ENCODE measurements at regions of chr6 and their contacts with region 1.

Region 1: DNA sequence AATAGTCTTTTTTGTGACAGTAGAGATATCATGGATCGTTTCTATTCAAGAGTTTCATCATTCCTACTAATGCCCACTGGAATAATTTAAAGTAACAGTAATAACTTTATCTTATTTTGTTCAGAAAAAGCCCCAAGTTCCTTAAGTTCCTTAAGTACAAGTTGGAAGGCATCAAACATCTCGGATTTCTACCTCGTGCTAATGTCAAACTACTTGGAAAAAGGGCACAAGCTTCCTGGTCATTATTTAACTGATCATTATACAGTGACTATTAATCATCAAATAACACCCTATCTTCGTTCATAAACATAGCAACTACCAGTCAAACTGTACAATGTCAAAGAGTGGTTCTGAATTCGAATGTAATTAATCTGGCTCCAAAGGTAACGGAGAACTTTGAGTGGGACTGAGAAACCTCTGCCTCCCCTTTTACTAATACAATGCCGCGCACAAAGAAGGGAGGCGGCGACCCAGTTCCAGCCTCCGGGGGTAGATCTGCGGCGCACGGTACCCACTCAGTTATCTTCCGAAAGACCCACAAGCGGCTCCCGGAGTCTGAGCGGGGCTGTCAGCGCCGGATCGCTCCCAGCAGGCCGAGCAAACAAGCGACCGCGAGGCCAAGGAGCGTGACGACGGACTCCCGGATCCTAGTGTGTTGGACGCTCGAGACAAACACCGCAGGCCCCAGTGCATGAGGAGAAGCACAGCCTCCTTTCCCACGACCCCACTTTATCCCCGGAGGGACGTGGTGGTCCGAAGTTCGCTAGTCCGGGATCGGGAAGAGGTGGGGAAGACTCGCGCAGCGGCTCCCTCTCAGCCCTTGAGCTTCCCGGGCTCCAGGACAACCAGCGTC is 716 bp downstream of the SHPRH start:
- DNase-seq: peak in 40 of 42 donors; percentile 24 to 79 (median 56)

Region 2: GRCh38 chr6:145539831-145540230 is 423.6 kb before region 1 on chr6:
- intact Hi-C with region 1: no loop called
- DNase-seq: no peak

Region 3: GRCh38 chr6:145734486-145735355 is 228.7 kb before region 1 on chr6:
- intact Hi-C with region 1: loop called (anchors 10 kb)
- DNase-seq: peak; percentile 73 to 94 (median 86)

Region 4: DNA sequence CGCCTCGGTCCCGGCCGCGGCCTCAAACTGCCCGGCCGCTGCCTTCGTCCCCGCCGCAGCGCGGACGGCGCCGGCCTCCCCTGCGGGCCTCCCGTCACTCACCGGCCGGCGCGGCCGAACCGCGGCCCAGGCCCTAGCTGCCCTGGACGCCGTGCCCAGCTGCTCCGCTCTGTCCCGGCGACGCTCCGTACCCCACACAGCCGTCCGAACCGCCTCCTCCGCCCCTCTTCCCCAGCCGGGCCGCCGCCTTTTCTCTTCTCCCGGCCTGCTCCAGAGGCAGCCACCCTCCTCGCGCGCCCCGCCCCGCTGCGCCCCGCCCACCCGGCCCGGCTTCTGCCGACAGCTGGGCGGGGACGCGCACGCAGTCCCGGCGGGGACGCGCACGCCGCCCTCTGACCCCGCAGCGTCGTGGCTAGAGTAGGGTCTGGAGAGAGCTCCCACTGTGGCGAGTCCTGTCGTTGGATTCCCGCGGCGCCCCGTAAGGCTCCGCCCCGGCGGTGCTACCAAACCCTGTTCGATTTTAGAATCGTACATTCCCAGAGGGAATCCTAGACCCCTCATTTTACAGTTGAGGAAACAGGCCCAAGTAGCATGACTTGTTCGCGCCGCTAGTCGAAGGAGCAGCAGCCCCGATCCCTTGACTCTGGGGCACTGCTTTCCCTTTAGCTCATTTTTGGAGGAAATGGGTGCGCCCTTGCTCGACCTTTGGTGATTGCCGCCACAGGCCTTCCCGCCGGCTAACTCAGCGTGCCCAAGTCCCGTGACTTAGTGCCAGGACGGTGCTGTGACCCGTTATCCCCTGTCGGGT is 148.7 kb before region 1 on chr6 and contains the start of gene FBXO30:
- intact Hi-C with region 1: loop called (anchors 10 kb)
- DNase-seq: peak; percentile 72 to 95 (median 90)

Region 5: GRCh38 chr6:146111881-146112450 is 148.5 kb after region 1 on chr6:
- intact Hi-C with region 1: no loop called
- DNase-seq: no peak

Region 6: DNA sequence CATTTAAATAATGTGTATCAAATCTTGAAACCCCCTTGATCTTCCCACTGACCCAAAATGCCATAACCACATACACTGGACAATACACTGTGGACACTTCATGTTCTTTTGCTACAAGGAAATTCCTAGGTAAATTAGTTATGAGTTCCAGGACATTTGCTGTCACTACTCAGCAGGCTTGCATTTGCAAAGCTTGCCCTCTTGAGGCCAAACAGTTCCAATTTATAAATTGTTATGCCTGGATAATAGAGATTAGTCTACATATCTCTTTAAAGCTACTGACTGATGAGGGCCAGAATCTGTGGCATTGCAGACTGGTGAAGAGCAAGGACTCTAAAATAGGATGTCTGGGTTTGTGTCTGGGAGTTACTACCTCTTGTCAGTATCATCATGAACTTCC is 562.8 kb after region 1 on chr6:
- intact Hi-C with region 1: no loop called
- DNase-seq: peak in 17 of 42 donors; percentile 3 to 59 (median 23)